ENCODE measurements at regions of chr10 and their contacts with region 1.

Region 1: DNA sequence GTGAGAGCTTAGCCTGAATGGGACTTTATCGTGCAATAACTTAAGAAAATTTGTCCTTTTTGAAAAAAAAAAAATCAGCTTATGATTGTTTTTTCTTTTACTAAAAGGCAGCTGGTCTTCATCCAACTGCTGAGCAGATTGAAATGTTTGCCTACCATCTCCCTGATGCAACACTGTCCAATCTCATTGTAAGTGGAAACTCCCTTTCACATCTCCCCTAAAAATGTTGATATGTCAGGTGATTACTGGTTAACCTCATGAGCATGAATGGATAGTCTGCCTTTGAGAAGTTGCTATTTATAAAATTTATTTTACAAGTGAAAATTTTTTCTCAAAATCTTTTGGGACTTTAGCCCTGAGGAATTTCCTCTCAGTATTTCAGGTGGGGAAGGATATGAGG is 17.8 kb upstream of the HKDC1 start:
- DNase-seq: no peak
- H3K4me3 Mint-ChIP-seq: peak overlapping the region; percentile 72
- H3K27ac Mint-ChIP-seq: peak overlapping the region; percentile 82
- H3K4me1 Mint-ChIP-seq: peaks cover 63% of the 10 kb centered on the region
- H3K27me3 Mint-ChIP-seq: no peaks in the 10 kb centered on the region

Region 2: DNA sequence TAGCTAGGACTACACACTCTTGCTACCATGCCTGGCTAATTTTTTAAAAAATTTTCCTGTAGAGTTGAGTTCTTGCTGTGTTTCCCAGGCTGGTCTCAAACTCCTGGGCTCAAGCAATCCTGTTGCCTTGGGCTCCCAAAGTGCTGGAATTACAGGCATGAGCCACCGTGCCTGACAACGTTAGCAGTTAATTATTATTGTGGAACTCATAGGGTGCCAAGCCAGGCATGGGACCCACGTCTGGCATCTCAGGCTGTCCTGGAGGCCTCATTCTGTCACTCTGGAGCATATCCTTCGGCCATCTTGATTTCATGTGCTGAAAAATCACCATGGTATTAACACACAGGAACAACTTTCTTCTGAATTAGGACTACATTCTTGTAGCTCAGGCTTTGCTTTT is 353.5 kb before region 1 on chr10:
- intact Hi-C with region 1: no loop called
- DNase-seq: no peak
- H3K4me3 Mint-ChIP-seq: no peak overlapping the region
- H3K27ac Mint-ChIP-seq: no peak overlapping the region
- H3K4me1 Mint-ChIP-seq: no peaks in the 10 kb centered on the region
- H3K27me3 Mint-ChIP-seq: peaks cover 4% of the 10 kb centered on the region

Region 3: DNA sequence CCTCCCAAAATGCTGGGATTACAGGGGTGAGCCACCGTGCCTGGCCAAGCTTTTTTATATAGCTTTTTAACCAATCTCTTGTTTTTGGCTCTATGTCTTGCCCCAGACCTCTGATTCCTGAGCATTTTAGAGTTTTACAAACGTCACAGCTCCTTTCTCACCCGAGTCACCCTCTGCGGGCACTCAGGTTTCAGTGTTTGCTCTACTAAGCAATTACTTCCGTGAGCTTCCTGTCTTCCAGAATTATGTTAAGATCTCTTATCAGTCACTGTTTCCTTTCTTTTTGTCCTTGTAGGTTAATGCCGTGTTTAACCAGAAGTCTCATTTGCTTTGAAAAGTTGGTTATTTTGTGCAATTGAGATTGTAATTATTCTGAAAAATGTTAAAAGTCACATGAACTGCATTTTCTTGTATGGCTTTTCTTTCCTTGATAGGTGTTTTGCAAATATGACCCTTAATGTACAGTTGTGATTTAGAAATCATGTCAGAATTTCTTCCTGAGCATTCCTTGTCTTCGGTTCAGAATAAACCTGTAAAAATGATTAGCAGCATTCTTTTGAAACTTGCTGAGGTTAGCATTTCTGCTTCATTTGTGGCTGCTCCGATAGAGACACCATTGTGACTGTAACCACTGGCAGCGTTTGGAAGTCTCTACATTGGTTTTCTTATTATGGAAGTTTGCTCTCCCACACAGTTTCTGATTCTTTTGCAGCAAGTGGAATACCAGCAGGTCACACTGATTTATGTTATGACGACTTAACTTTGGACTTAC is 13.3 kb after region 1 on chr10:
- intact Hi-C with region 1: loop called (anchors 1 kb)
- DNase-seq: no peak
- H3K4me3 Mint-ChIP-seq: peak overlapping the region; percentile 27
- H3K27ac Mint-ChIP-seq: peak overlapping the region; percentile 87
- H3K4me1 Mint-ChIP-seq: peaks cover 36% of the 10 kb centered on the region
- H3K27me3 Mint-ChIP-seq: no peaks in the 10 kb centered on the region

Measured in activated T-helper 1 cell treated with anti-CD3 and anti-CD28 coated beads, Interleukin-12 subunit alpha, Interleukin-12 subunit beta, Interleukin-2, Interleukin-4 antibody, amounts not matched to agents 30 ng/mL and 10 ng/mL and 1 ng/mL, durations not matched to agents 14 hours and 24 hours and 36 hours (primary cell).